ENCODE measurements at regions of chr4 and their contacts with region 1.

Region 1: GRCh38 chr4:98995183-98996055 is at the start of gene METAP1:
- DNase-seq: peak; percentile 96
- H3K4me3 Mint-ChIP-seq: peak within 1 kb of the TSS; percentile 75
- H3K27ac Mint-ChIP-seq: peak within 1 kb of the TSS; percentile 84
- H3K4me1 Mint-ChIP-seq: peaks cover 14% of the 10 kb centered on the region
- H3K27me3 Mint-ChIP-seq: no peaks in the 10 kb centered on the region
- CTCF ChIP-seq: peak; percentile 58
- total RNA-seq, gene METAP1: 43.5 and 61.4 TPM in 2 replicates

Region 2: DNA sequence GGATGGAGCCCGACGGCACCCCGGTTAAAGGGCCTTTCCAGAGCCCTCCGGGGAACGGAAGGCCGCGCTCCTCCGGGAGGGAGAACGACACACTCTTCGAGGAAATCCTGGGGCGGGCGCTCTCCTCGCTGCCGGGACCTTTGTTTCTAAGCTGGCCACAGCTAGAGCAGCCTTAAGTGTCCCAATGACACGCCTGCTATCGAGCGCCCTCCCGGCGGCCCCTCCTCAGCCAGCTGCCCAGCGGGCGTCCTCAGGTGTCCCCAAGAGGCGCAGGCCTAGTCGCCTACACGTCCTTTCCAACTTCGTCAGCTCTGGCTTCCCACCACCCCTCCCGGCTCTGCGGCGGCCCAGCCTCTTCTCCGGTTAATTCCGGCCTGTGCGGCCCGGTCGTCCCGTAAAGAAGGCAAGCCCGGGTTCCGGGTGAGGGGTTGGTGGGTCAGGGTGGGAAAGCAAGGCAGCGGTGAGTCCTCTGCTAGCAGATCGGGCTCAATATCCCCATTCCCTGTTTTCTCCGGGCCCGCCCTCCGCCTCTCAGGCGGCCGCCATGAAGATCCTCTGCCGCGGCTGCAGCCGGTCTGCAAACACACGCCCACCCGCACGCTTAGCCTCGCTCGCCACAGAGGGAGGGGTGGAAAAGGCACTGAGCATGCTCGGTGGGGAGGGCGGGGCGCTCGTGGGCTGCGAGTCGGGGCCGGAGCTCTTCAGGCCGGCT is 734.7 kb before region 1 on chr4:
- CTCF ChIA-PET with region 1: interaction called, 3 read pairs
- POLR2A ChIA-PET with region 1: interaction called, 12 read pairs
- intact Hi-C with region 1: no loop called
- DNase-seq: peak; percentile 95
- H3K4me3 Mint-ChIP-seq: peak overlapping the region; percentile 89
- H3K27ac Mint-ChIP-seq: peak overlapping the region; percentile 86
- H3K4me1 Mint-ChIP-seq: peaks cover 35% of the 10 kb centered on the region
- H3K27me3 Mint-ChIP-seq: no peaks in the 10 kb centered on the region
- CTCF ChIP-seq: no peak

Region 3: GRCh38 chr4:98411731-98412130 is 583.7 kb before region 1 on chr4:
- CTCF ChIA-PET with region 1: no interaction called
- POLR2A ChIA-PET with region 1: no interaction called
- intact Hi-C with region 1: no loop called
- DNase-seq: no peak
- H3K4me3 Mint-ChIP-seq: no peak overlapping the region
- H3K27ac Mint-ChIP-seq: no peak overlapping the region
- H3K4me1 Mint-ChIP-seq: no peaks in the 10 kb centered on the region
- H3K27me3 Mint-ChIP-seq: no peaks in the 10 kb centered on the region
- CTCF ChIP-seq: no peak

Region 4: DNA sequence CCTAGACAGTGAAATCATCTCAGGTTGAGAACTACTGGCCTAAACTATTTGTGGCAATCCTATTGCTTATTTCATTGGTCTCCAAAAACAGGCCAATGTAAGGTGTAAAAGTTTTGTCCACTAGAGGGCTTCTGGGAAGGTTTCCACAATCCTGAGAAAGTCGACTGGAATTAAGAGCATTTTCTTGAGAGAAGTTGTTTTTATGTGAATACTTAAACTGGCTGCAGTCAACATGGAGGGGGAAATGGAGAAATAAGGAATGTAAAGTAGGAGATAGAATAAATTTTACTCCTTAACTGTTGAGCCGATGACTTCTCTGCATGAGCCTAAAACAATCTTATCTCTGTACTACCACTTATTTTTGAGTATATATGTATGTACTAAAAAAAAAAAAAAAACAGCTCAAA is 55.5 kb before region 1 on chr4:
- CTCF ChIA-PET with region 1: interaction called, 16 read pairs
- POLR2A ChIA-PET with region 1: interaction called, 5 read pairs
- intact Hi-C with region 1: loop called (anchors 2 kb)
- DNase-seq: peak; percentile 68
- H3K4me3 Mint-ChIP-seq: no peak overlapping the region
- H3K27ac Mint-ChIP-seq: no peak overlapping the region
- H3K4me1 Mint-ChIP-seq: peaks cover 22% of the 10 kb centered on the region
- H3K27me3 Mint-ChIP-seq: no peaks in the 10 kb centered on the region
- CTCF ChIP-seq: peak; percentile 55

Region 5: GRCh38 chr4:99024481-99025275 is 29.3 kb after region 1 on chr4:
- CTCF ChIA-PET with region 1: interaction called, 4 read pairs
- POLR2A ChIA-PET with region 1: interaction called, 10 read pairs
- intact Hi-C with region 1: no loop called
- DNase-seq: no peak
- H3K4me3 Mint-ChIP-seq: no peak overlapping the region
- H3K27ac Mint-ChIP-seq: no peak overlapping the region
- H3K4me1 Mint-ChIP-seq: peaks cover 27% of the 10 kb centered on the region
- H3K27me3 Mint-ChIP-seq: no peaks in the 10 kb centered on the region
- CTCF ChIP-seq: no peak

Region 6: DNA sequence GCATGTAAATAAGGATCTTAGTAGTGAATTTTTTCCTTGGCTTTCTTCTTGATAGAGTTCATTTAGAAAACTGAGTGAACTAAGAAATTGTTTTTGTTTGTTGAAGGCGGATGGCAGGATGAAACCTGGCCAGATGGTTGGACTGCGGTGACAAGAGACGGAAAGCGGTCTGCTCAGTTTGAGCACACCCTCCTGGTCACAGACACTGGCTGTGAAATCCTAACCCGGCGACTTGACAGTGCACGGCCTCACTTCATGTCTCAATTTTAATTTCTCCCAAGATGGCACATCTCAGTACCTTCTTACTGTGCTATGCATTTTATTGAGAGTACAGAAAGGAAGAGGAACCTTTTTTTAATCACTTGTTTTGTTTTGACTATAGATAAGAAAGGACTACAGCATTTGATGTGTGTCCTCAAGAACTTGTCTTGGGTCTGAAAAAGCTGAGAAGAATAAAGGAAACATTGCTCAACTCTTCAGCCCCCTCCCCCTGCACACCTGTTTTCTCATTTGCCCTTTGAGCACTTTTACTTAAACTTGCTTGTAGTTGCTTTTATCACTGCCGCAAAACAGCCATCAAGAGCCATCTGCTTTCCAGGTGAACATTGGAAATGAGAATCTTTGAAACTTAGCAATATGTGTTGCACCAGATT is 65.8 kb after region 1 on chr4:
- CTCF ChIA-PET with region 1: interaction called, 155 read pairs
- POLR2A ChIA-PET with region 1: interaction called, 32 read pairs
- intact Hi-C with region 1: loop called (anchors 1 kb)
- DNase-seq: no peak
- H3K4me3 Mint-ChIP-seq: no peak overlapping the region
- H3K27ac Mint-ChIP-seq: peak overlapping the region; percentile 93
- H3K4me1 Mint-ChIP-seq: peaks cover 21% of the 10 kb centered on the region
- H3K27me3 Mint-ChIP-seq: no peaks in the 10 kb centered on the region
- CTCF ChIP-seq: no peak

Region 7: GRCh38 chr4:99310389-99310788 is 315.0 kb after region 1 on chr4:
- CTCF ChIA-PET with region 1: no interaction called
- POLR2A ChIA-PET with region 1: no interaction called
- intact Hi-C with region 1: no loop called
- DNase-seq: no peak
- H3K4me3 Mint-ChIP-seq: no peak overlapping the region
- H3K27ac Mint-ChIP-seq: no peak overlapping the region
- H3K4me1 Mint-ChIP-seq: no peaks in the 10 kb centered on the region
- H3K27me3 Mint-ChIP-seq: no peaks in the 10 kb centered on the region
- CTCF ChIP-seq: no peak

Region 8: GRCh38 chr4:99405433-99406115 is 410.2 kb after region 1 on chr4:
- CTCF ChIA-PET with region 1: interaction called, 6 read pairs
- POLR2A ChIA-PET with region 1: interaction called, 3 read pairs
- intact Hi-C with region 1: loop called (anchors 1 kb)
- DNase-seq: peak; percentile 84
- H3K4me3 Mint-ChIP-seq: no peak overlapping the region
- H3K27ac Mint-ChIP-seq: peak overlapping the region; percentile 76
- H3K4me1 Mint-ChIP-seq: peaks cover 16% of the 10 kb centered on the region
- H3K27me3 Mint-ChIP-seq: no peaks in the 10 kb centered on the region
- CTCF ChIP-seq: peak; percentile 96

Measured in MCF 10A (cell line).